AG04450 (cell line): ENCODE measurements at regions of chr10 and their contacts with region 1.

Region 1: DNA sequence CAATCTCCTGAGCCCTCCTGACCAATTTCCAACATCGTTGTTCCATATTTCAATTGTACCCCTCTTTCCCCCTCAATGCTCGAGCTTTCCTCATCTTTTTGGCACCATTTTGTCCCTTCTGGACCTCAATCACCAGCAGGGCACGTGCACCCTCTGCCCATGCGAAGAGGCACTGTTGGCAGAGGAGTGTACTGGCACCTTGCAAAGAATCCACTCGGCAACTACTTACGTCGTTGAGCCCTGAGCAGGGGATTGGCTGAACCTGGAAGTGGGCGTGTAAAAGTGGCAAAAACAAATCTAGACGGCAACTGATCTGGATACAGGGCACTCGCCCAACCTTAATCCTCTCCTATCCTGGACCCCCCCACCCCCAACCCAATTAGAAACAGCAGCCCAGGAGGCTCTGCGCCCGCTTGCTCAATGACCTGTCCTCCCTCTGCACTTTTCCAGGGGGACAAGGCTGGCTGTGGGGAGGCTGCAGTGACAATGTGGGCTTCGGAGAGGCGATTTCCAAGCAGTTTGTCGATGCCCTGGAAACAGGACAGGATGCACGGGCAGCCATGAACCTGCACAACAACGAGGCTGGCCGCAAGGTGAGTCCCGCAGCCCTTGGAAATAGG is 18.8 kb downstream of the WNT8B start:
- DNase-seq: peak; percentile 59
- H3K4me3 ChIP-seq: peak overlapping the region; percentile 53
- H3K27ac ChIP-seq: no peak overlapping the region
- H3K27me3 ChIP-seq: peaks cover 67% of the 10 kb centered on the region
- CTCF ChIP-seq: no peak

Region 2: DNA sequence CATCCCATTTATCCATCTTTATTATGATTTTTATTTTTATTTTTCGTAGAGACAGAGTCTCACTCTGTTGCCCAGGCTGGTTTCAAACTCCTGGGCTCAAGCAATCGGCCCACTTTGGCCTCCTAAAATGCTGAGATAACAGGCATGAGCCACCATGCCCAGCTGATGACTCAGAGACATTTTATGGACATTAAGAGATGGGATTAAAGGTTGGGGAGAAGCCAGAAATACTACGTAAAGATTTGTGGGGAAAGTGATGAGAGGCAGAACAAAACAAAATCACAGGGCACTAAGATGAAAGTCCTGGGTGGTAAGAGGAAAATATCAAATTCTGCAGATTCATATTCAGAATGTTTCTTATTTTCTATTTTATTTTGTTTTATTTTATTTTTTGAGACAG is 11.2 kb before region 1 on chr10:
- CTCF ChIA-PET with region 1: interaction called, 11 read pairs
- POLR2A ChIA-PET with region 1: no interaction called
- DNase-seq: no peak
- H3K4me3 ChIP-seq: no peak overlapping the region
- H3K27ac ChIP-seq: no peak overlapping the region
- H3K27me3 ChIP-seq: peaks cover 19% of the 10 kb centered on the region
- CTCF ChIP-seq: no peak

Region 3: GRCh38 chr10:100501423-100501822 is 19.9 kb after region 1 on chr10:
- CTCF ChIA-PET with region 1: interaction called, 52 read pairs
- POLR2A ChIA-PET with region 1: no interaction called
- DNase-seq: peak; percentile 11
- H3K4me3 ChIP-seq: no peak overlapping the region
- H3K27ac ChIP-seq: no peak overlapping the region
- H3K27me3 ChIP-seq: no peaks in the 10 kb centered on the region
- CTCF ChIP-seq: no peak